Activated B cell treated with CpG ODN at 0.5 μM for 24 hours (primary cell): ENCODE measurements at regions of chr6 and their contacts with region 1.

Region 1: GRCh38 chr6:12075067-12075563 is 63.0 kb downstream of the HIVEP1 start:
- DNase-seq: no peak
- ATAC-seq: peak; percentile 25
- H3K4me3 Mint-ChIP-seq: no peak overlapping the region
- H3K27ac Mint-ChIP-seq: no peak overlapping the region
- H3K4me1 Mint-ChIP-seq: peaks cover 33% of the 10 kb centered on the region
- H3K27me3 Mint-ChIP-seq: no peaks in the 10 kb centered on the region
- CTCF ChIP-seq: no peak

Region 2: GRCh38 chr6:11700118-11700718 is 374.9 kb before region 1 on chr6:
- CTCF ChIA-PET with region 1: interaction called, 6 read pairs
- POLR2A ChIA-PET with region 1: no interaction called
- intact Hi-C with region 1: loop called (anchors 1 kb)
- DNase-seq: no peak
- ATAC-seq: no peak
- H3K4me3 Mint-ChIP-seq: no peak overlapping the region
- H3K27ac Mint-ChIP-seq: no peak overlapping the region
- H3K4me1 Mint-ChIP-seq: no peaks in the 10 kb centered on the region
- H3K27me3 Mint-ChIP-seq: no peaks in the 10 kb centered on the region
- CTCF ChIP-seq: no peak

Region 3: DNA sequence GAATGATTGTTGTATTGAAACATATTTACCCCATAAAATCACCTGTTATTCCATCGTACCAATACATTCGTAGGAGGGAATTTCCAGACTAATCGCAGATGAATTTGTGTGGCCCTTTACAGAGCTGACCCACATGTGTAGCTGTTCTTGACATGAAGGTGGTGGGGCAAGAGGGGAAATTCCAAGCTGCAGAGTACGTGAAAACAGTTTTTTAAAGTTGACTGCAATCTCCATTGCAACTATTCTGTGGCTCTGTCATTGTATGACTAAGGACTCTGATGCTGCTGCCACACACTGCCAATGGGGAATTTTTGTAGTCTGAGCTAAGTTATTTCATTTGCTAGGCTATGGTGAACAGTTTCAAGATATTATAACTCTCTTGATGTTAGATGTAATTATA is 250.1 kb before region 1 on chr6:
- CTCF ChIA-PET with region 1: interaction called, 10 read pairs
- POLR2A ChIA-PET with region 1: no interaction called
- intact Hi-C with region 1: loop called (anchors 1 kb)
- DNase-seq: no peak
- ATAC-seq: peak; percentile 83
- H3K4me3 Mint-ChIP-seq: peak overlapping the region; percentile 36
- H3K27ac Mint-ChIP-seq: peak overlapping the region; percentile 64
- H3K4me1 Mint-ChIP-seq: peaks cover 42% of the 10 kb centered on the region
- H3K27me3 Mint-ChIP-seq: no peaks in the 10 kb centered on the region
- CTCF ChIP-seq: no peak

Region 4: DNA sequence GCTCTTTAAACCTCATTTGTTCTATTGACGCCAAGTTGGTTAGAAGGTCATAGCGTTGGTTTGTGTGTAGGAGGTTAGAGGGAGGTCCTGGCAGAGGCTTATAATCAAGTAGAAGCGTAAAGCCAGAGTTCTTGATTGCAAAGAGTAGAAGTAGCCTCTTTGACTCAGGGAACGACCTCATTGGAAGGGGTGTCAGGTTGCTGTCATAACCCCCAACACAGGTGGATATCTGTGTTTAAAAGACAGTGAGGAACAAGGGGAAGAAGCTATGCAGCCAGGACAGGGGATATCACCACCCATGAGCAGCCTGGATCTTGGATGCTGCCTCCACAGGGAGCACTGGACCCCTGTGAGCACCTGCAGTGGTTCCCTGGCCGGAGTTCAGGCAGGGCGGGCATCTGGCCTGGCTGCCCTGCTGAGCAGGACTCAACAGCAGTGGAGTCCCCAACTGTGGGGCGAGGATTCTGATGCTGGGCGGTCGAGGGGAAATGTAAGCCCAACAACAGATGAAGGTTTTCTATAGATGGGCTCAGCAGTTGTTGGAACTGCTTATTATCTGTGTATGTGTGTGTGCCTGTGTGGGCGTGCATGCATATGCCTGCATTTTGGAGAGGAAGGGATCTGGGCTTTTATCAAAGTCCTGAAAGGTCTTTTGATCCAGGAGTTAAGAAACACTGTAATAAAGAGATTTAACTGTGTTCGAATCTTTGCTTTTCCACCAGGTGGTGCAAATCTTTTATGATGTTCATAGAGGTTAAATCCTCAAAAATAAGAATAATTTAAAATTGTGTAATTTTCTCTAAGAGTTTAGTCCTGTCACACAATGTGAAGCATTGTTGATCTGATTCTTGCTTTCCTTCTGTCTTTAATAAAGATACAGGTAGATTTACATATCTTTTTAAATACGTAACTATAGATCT is 35.3 kb before region 1 on chr6:
- CTCF ChIA-PET with region 1: interaction called, 3 read pairs
- POLR2A ChIA-PET with region 1: no interaction called
- intact Hi-C with region 1: loop called (anchors 2 kb)
- DNase-seq: no peak
- ATAC-seq: no peak
- H3K4me3 Mint-ChIP-seq: no peak overlapping the region
- H3K27ac Mint-ChIP-seq: peak overlapping the region; percentile 73
- H3K4me1 Mint-ChIP-seq: peaks cover 58% of the 10 kb centered on the region
- H3K27me3 Mint-ChIP-seq: no peaks in the 10 kb centered on the region
- CTCF ChIP-seq: no peak

Region 5: DNA sequence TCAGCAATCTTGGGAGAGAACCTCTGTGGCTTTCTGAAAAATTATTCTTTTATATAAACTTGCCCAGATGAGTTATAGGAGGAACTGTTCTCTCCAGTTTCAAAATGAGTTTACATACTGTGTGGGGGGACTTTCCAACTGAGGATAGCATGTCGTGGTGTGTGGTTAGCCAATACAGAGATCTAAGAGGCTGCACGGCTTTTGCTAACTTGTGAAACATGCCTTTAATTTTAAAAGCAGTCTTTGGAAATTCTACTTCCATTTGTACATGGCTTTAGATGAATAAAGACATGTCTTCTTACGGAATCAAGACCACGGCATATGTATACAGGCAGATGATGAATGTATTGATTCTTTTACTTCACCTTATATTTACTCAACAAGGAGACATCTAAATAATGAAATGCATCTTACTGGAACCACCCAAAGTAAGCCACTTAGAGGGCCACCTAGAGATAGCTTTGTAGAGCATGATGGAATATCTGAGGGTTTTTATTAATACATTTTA is 23.2 kb before region 1 on chr6:
- CTCF ChIA-PET with region 1: interaction called, 4 read pairs
- POLR2A ChIA-PET with region 1: no interaction called
- intact Hi-C with region 1: loop called (anchors 2 kb)
- DNase-seq: no peak
- ATAC-seq: peak; percentile 79
- H3K4me3 Mint-ChIP-seq: peak overlapping the region; percentile 81
- H3K27ac Mint-ChIP-seq: peak overlapping the region; percentile 97
- H3K4me1 Mint-ChIP-seq: peaks cover 78% of the 10 kb centered on the region
- H3K27me3 Mint-ChIP-seq: no peaks in the 10 kb centered on the region
- CTCF ChIP-seq: no peak

Region 6: DNA sequence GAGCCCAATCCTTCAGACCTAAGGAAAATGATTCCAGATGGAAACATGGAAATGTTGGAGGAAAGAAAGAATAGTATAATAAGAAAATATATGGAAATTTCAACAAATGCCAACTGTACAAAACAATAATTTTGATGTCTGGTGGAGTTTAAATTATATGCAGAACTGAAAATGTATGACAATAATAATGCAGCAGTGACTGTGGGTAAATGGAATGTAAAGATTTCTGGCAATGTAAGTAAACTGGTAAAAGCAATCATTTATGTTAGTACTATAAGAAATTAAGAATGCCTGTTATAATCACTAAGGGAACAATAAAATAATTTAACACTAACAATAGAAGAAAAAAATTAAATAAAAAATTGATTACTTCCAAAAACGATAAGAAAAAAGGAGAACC is 304.1 kb after region 1 on chr6:
- CTCF ChIA-PET with region 1: no interaction called
- POLR2A ChIA-PET with region 1: no interaction called
- intact Hi-C with region 1: no loop called
- DNase-seq: no peak
- ATAC-seq: no peak
- H3K4me3 Mint-ChIP-seq: no peak overlapping the region
- H3K27ac Mint-ChIP-seq: no peak overlapping the region
- H3K4me1 Mint-ChIP-seq: no peaks in the 10 kb centered on the region
- H3K27me3 Mint-ChIP-seq: peaks cover 7% of the 10 kb centered on the region
- CTCF ChIP-seq: no peak